GM12878 (cell line): ENCODE measurements at regions of chr7 and their contacts with region 1.

Region 1: DNA sequence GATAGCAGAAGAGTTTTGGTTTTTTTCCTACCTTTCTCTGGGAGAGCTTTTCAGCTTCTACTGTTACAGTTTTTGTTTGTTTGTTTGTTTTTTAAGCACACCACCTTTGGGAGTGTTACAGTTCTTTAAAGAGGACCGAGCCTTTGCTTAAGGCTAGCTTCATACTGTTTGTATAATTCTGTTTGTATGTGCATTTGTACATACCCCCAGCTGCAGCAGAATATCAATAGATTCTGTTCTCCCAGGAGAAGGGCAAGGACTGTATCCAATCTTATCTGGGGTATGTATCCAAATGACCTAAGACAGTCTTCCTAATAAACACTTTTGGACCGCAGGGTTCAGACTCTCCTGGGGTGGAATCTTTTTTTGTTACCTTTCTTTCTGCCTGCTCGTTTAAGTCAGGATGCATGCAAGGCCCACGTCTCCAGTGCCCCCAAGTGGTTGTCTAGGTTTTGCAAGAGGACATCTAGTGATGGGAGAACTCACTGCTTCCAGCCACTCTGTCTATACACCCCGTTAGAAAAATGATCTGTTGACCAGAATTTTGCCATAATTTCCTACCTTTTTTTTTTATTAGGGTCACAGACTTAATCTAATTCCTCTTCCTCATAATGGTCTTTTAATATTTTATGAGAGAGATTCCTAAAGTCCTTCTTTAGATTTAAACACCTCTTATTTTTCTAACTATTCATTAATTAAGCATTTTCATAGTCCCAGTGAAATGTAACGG is 23.9 kb downstream of the NRF1 start:
- DNase-seq: peak; percentile 47
- ATAC-seq: peak; percentile 100
- H3K4me3 ChIP-seq: no peak overlapping the region
- H3K27ac ChIP-seq: no peak overlapping the region
- H3K4me1 ChIP-seq: peaks cover 7% of the 10 kb centered on the region
- H3K27me3 ChIP-seq: no peaks in the 10 kb centered on the region
- CTCF ChIP-seq: peak; percentile 85 to 89 (median 89)
- EP300 ChIP-seq: no peak
- POLR2A ChIP-seq: no peak
- RAD21 ChIP-seq: peak; percentile 85

Region 2: DNA sequence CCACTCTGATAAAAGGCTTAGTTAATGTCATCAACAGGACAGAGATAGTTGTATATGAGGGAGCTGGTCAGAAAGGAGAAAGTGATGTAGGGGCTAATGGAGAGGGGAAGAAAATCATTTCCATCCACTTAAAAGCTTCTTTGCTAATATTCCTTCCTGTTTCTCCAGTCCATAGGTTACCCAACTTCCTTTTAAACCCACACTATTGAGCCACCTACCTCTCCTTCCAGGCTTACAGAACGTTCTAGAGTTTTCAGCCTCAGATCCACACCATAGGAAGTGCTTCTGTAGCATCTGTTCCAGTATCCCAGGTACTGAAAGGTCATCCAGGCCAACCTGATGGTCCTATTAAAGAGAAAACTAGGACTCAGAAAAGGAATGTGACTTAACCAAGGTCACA is 173.0 kb before region 1 on chr7:
- CTCF ChIA-PET with region 1: no interaction called
- POLR2A ChIA-PET with region 1: no interaction called
- RAD21 ChIA-PET with region 1: no interaction called
- SMC1A ChIA-PET with region 1: no interaction called
- in situ Hi-C with region 1: no loop called
- intact Hi-C with region 1: no loop called
- DNase-seq: no peak
- ATAC-seq: no peak
- H3K4me3 ChIP-seq: no peak overlapping the region
- H3K27ac ChIP-seq: no peak overlapping the region
- H3K4me1 ChIP-seq: no peaks in the 10 kb centered on the region
- H3K27me3 ChIP-seq: no peaks in the 10 kb centered on the region
- CTCF ChIP-seq: no peak
- EP300 ChIP-seq: no peak
- POLR2A ChIP-seq: no peak
- RAD21 ChIP-seq: no peak

Region 3: GRCh38 chr7:129617652-129618051 is 17.8 kb before region 1 on chr7:
- CTCF ChIA-PET with region 1: interaction called, 328 read pairs
- POLR2A ChIA-PET with region 1: interaction called, 16 read pairs
- RAD21 ChIA-PET with region 1: interaction called, 39 read pairs
- SMC1A ChIA-PET with region 1: interaction called, 48 read pairs
- in situ Hi-C with region 1: no loop called
- intact Hi-C with region 1: loop called (anchors 1 kb)
- DNase-seq: no peak
- ATAC-seq: no peak
- H3K4me3 ChIP-seq: no peak overlapping the region; the same call in 1 of the 2 replicates
- H3K27ac ChIP-seq: 0 out of 2 replicates have a peak overlapping the region, but pooled peaks have one; percentile 31
- H3K4me1 ChIP-seq: peaks cover 20% of the 10 kb centered on the region; the same call in 1 of the 2 replicates
- H3K27me3 ChIP-seq: no peaks in the 10 kb centered on the region
- CTCF ChIP-seq: no peak
- EP300 ChIP-seq: no peak
- POLR2A ChIP-seq: no peak
- RAD21 ChIP-seq: no peak

Region 4: GRCh38 chr7:129650056-129650758 is 14.7 kb after region 1 on chr7:
- CTCF ChIA-PET with region 1: interaction called, 5 read pairs
- POLR2A ChIA-PET with region 1: interaction called, 5 read pairs
- RAD21 ChIA-PET with region 1: interaction called, 5 read pairs
- SMC1A ChIA-PET with region 1: interaction called, 14 read pairs
- in situ Hi-C with region 1: no loop called
- intact Hi-C with region 1: no loop called
- DNase-seq: no peak
- ATAC-seq: no peak
- H3K4me3 ChIP-seq: no peak overlapping the region
- H3K27ac ChIP-seq: no peak overlapping the region
- H3K4me1 ChIP-seq: peaks cover 7% of the 10 kb centered on the region
- H3K27me3 ChIP-seq: no peaks in the 10 kb centered on the region
- CTCF ChIP-seq: no peak
- EP300 ChIP-seq: no peak
- POLR2A ChIP-seq: no peak
- RAD21 ChIP-seq: no peak

Region 5: DNA sequence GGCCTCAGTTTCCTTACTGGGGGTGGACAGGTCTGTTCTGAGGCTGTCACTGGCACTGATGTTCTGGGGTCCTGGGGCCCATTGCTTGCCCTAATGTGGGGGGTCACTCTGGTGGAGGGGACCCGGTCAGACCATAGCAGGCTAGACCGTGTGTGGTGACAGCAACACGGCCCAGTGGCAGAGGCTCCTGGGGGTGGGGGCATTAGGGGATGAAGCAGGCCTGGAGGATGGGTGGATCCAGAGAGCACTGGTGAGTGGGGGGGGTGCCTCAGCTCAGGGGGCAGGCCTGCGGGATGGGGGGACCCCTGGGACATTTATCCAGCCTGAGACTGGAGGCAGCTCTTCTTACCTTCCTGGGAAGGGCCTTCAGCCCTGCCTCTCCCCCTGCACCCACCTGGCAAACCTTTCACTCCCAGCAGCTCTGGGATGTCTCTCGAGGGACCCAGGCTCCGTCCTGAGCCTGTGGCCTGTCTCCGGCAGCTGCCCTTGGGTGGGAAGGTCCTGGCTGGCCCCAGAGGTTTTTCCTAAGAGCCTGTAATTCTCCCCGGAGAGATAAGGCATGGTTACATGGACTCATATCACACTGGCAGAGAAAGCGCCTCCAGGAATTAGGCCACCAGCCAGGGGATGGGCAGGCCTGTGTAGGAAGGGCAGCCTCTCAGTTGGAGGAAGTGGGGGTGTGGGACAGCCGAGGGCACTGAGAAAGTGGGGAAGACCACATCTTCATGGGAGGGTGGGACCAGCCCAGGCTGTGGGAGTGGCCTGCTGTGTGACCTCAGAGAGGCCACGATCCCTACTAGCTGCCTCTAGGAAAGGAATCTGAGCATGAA is 169.6 kb after region 1 on chr7:
- CTCF ChIA-PET with region 1: no interaction called
- POLR2A ChIA-PET with region 1: no interaction called
- RAD21 ChIA-PET with region 1: no interaction called
- SMC1A ChIA-PET with region 1: no interaction called
- in situ Hi-C with region 1: no loop called
- intact Hi-C with region 1: no loop called
- DNase-seq: no peak
- ATAC-seq: no peak
- H3K4me3 ChIP-seq: no peak overlapping the region
- H3K27ac ChIP-seq: no peak overlapping the region
- H3K4me1 ChIP-seq: no peaks in the 10 kb centered on the region
- H3K27me3 ChIP-seq: no peaks in the 10 kb centered on the region
- CTCF ChIP-seq: no peak
- EP300 ChIP-seq: no peak
- POLR2A ChIP-seq: no peak
- RAD21 ChIP-seq: no peak